PC-3 (cell line): ENCODE measurements at regions of chr6 and their contacts with region 1.

Region 1: GRCh38 chr6:21946298-21946783 is 350.5 kb downstream of the PRL start:
- DNase-seq: peak; percentile 46
- ATAC-seq: no peak
- H3K4me3 ChIP-seq: no peak overlapping the region
- H3K27ac ChIP-seq: no peak overlapping the region
- H3K4me1 ChIP-seq: peaks cover 32% of the 10 kb centered on the region
- H3K27me3 ChIP-seq: no peaks in the 10 kb centered on the region
- CTCF ChIP-seq: no peak

Region 2: DNA sequence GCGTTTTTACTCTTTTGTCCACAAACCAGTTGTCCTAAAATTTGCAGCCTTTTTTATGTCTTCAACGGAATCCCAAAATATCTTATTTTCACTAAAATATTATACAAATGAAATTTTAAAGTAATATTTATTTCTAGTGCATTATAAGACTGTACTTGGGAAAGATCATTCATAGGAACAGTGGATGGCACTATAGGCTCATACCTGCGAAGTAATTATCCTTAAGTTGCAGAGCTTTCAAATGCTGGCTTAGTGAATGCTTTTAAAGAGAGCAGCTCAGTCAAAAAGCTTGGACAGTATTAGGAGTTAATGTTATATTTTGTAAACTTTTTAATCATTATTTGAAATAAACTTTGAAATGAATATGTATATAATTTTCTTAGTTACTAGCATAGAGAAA is 1157.2 kb before region 1 on chr6:
- CTCF ChIA-PET with region 1: no interaction called
- POLR2A ChIA-PET with region 1: interaction called, 12 read pairs
- intact Hi-C with region 1: no loop called
- DNase-seq: no peak
- ATAC-seq: peak; percentile 55; the same call in 1 of the 2 replicates
- H3K4me3 ChIP-seq: no peak overlapping the region
- H3K27ac ChIP-seq: no peak overlapping the region
- H3K4me1 ChIP-seq: no peaks in the 10 kb centered on the region
- H3K27me3 ChIP-seq: no peaks in the 10 kb centered on the region
- CTCF ChIP-seq: no peak

Region 3: DNA sequence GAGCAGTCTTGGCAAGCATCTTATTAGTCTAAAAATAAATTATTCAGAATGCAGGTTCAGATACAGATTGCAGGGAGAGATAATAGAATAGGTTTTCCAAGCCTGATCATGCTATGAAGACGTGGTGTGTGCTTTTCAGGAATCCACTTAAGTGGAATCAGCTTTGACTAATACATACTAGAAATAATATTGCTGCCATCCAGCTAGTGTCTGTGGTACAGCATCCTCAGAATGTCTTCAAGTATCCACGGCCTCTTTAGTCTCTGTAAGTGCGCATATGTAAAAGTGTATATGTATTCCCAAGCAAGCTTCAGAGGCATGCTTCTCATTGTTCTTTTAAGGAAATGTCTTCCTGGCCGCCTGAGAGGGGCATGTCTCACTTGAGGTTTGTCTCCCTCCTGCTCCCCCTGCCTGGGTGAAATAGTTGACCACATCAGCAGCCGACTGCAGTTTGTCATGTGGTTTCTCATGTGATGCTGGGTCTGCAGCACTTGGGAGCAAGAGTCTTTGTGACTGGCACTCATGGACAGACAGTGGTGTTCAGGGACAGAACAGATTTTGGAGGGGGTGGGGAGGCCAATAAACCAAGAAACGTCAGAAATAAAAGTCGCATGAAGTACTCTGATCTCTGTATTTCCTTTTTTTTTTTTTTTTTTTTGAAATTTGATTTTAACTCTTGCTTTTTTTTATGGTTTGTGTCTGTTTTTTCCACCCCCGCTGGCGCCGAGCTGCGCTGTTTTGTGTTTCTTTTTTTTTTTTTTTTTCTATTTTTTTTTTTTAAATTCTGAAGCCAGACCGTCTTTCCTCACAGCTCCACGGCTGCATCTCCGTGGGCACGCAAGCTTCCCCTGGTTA is 199.7 kb after region 1 on chr6:
- CTCF ChIA-PET with region 1: no interaction called
- POLR2A ChIA-PET with region 1: no interaction called
- intact Hi-C with region 1: loop called (anchors 10 kb)
- DNase-seq: no peak
- ATAC-seq: no peak
- H3K4me3 ChIP-seq: no peak overlapping the region
- H3K27ac ChIP-seq: no peak overlapping the region
- H3K4me1 ChIP-seq: peaks cover 10% of the 10 kb centered on the region
- H3K27me3 ChIP-seq: no peaks in the 10 kb centered on the region
- CTCF ChIP-seq: no peak